MCF 10A (cell line): ENCODE measurements at regions of chr1 and their contacts with region 1.

Region 1: DNA sequence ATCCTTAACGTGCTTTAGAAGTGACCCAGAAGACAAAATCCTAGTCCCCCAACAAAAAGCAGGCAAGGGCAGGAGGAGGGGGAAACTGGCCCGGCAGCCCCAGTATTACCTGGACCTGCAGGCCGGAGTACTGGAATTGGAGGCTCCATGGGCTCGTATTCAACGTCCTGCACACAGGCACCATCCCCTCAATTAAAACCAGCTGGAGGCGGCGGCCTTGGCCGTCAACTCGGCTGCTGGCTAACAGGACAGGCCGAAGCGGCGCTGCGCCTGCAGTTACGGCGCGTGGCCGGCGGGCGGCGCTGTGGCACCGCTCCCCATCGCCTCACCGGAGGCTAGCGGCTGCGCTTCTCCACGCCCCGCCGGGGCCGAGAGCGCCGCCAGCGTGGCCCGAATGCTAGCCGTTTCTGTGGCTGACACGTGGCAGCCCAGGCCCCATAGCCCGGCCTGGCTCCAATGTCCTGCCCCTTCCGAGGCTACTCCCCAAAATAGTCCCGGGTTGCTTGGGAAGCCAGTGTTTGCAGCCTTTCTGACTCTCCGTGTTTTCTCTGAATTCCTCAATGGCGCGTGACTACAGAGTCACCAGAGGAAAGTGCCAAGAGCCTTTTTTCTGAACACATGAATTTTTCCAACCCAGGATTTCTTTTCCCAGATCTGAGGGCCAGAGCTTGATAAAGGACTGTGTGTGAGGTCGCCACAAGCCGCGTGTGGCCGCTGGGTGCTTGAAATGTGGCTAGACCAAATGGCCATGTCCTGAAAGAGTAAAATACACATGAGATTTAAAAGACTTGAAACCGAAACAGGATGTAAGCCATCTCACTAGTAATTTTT is 82.5 kb downstream of the HHIPL2 start:
- DNase-seq: peak; percentile 98
- H3K4me3 Mint-ChIP-seq: peak overlapping the region; percentile 67
- H3K27ac Mint-ChIP-seq: peak overlapping the region; percentile 92
- H3K4me1 Mint-ChIP-seq: peaks cover 14% of the 10 kb centered on the region
- H3K27me3 Mint-ChIP-seq: no peaks in the 10 kb centered on the region
- CTCF ChIP-seq: peak; percentile 100

Region 2: DNA sequence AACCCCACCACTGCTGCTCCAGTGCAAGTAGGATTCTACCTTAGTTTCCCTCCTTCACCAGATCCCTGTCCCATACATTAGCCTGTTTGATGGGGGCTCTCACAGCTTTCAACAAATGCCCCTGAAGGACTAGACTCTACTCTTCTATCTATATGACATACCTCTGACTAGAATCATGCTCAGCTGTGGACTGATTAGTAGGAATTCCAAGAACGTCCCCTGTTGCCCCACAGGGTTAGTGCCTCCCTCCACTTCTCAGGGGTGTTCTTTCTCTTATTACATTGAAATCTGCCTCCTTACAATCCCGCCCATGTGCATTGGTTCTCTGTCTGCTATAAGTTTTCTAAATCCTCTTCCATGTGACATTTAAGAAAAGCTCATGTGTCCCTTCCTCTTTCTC is 347.6 kb before region 1 on chr1:
- CTCF ChIA-PET with region 1: no interaction called
- POLR2A ChIA-PET with region 1: no interaction called
- intact Hi-C with region 1: no loop called
- DNase-seq: no peak
- H3K4me3 Mint-ChIP-seq: no peak overlapping the region
- H3K27ac Mint-ChIP-seq: no peak overlapping the region
- H3K4me1 Mint-ChIP-seq: no peaks in the 10 kb centered on the region
- H3K27me3 Mint-ChIP-seq: no peaks in the 10 kb centered on the region
- CTCF ChIP-seq: no peak

Region 3: GRCh38 chr1:222275729-222276465 is 189.5 kb before region 1 on chr1:
- CTCF ChIA-PET with region 1: no interaction called
- POLR2A ChIA-PET with region 1: no interaction called
- intact Hi-C with region 1: no loop called
- DNase-seq: no peak
- H3K4me3 Mint-ChIP-seq: no peak overlapping the region
- H3K27ac Mint-ChIP-seq: no peak overlapping the region
- H3K4me1 Mint-ChIP-seq: no peaks in the 10 kb centered on the region
- H3K27me3 Mint-ChIP-seq: no peaks in the 10 kb centered on the region
- CTCF ChIP-seq: no peak

Region 4: GRCh38 chr1:222339376-222339947 is 126.0 kb before region 1 on chr1:
- CTCF ChIA-PET with region 1: no interaction called
- POLR2A ChIA-PET with region 1: no interaction called
- intact Hi-C with region 1: no loop called
- DNase-seq: no peak
- H3K4me3 Mint-ChIP-seq: no peak overlapping the region
- H3K27ac Mint-ChIP-seq: no peak overlapping the region
- H3K4me1 Mint-ChIP-seq: peaks cover 7% of the 10 kb centered on the region
- H3K27me3 Mint-ChIP-seq: no peaks in the 10 kb centered on the region
- CTCF ChIP-seq: no peak

Region 5: DNA sequence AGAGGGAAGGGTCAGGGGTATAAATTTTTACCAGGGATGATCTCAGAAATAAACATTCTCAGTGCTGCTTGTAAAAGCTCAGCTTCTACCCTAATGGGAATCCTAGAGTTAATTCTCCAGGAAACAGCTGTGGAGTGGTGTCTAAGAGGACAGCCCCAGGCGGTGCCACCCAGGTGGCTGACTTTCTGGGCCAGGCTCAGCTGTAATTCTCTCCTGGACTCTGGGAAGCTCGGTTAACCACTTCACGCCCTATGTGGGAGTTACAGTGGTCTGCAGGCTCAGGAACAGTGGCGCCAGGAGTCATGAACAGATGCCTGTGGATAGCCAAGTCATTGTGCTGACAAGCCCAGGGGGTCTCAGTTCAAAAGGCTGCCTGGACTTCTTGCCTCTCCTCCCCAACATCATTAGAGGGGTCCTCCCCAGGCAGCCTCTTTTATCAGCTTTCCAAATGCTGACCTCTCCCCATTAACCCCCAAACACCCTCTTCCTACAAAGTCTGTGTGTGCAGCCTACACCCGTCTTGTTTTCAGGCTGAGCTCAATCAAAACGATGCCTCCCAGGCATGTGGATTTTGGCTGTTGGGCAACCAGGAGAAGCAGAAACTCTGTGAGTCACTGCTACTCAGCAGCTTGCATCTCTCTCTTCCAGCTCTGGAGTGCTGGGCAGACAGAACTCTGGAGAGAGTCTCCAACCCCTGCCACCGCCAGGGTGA is 81.3 kb after region 1 on chr1:
- CTCF ChIA-PET with region 1: interaction called, 24 read pairs
- POLR2A ChIA-PET with region 1: interaction called, 17 read pairs
- intact Hi-C with region 1: loop called (anchors 1 kb)
- DNase-seq: peak; percentile 98
- H3K4me3 Mint-ChIP-seq: peak overlapping the region; percentile 46
- H3K27ac Mint-ChIP-seq: peak overlapping the region; percentile 5
- H3K4me1 Mint-ChIP-seq: peaks cover 26% of the 10 kb centered on the region
- H3K27me3 Mint-ChIP-seq: no peaks in the 10 kb centered on the region
- CTCF ChIP-seq: no peak

Region 6: GRCh38 chr1:222589462-222590302 is 124.3 kb after region 1 on chr1 and contains the start of gene TAF1A:
- CTCF ChIA-PET with region 1: interaction called, 20 read pairs
- POLR2A ChIA-PET with region 1: interaction called, 21 read pairs
- intact Hi-C with region 1: loop called (anchors 2 kb)
- DNase-seq: peak; percentile 97
- H3K4me3 Mint-ChIP-seq: peak within 1 kb of the TSS; percentile 97
- H3K27ac Mint-ChIP-seq: peak within 1 kb of the TSS; percentile 96
- H3K4me1 Mint-ChIP-seq: peaks cover 58% of the 10 kb centered on the region
- H3K27me3 Mint-ChIP-seq: no peaks in the 10 kb centered on the region
- CTCF ChIP-seq: no peak
- total RNA-seq, gene TAF1A: 38.2 and 39.3 TPM in 2 replicates

Region 7: DNA sequence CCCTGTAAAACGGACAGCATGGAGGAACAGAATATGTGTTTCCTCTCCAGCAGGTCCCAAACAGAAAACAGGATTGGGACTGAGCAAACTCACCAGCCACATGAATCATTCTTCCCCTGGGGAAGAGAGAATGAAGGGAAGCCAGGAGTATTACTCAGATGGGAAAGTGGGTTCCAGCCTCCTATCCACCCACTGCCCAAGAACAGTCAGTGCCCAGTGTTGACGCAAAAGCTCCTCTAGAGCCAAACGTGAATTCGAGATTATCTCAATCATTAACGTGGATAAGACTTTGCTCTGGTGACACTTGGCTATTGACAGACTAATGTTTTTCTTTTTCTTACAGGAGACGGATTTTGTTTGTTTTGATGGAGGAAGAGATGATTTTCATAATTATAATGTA is 161.8 kb after region 1 on chr1:
- CTCF ChIA-PET with region 1: interaction called, 201 read pairs
- POLR2A ChIA-PET with region 1: interaction called, 6 read pairs
- intact Hi-C with region 1: no loop called
- DNase-seq: peak; percentile 68
- H3K4me3 Mint-ChIP-seq: no peak overlapping the region
- H3K27ac Mint-ChIP-seq: peak overlapping the region; percentile 46
- H3K4me1 Mint-ChIP-seq: peaks cover 10% of the 10 kb centered on the region
- H3K27me3 Mint-ChIP-seq: no peaks in the 10 kb centered on the region
- CTCF ChIP-seq: no peak

Region 8: GRCh38 chr1:222643938-222644635 is 178.7 kb after region 1 on chr1:
- CTCF ChIA-PET with region 1: interaction called, 76 read pairs
- POLR2A ChIA-PET with region 1: interaction called, 45 read pairs
- intact Hi-C with region 1: loop called (anchors 2 kb)
- DNase-seq: peak; percentile 100
- H3K4me3 Mint-ChIP-seq: peak overlapping the region; percentile 85
- H3K27ac Mint-ChIP-seq: peak overlapping the region; percentile 97
- H3K4me1 Mint-ChIP-seq: peaks cover 10% of the 10 kb centered on the region
- H3K27me3 Mint-ChIP-seq: no peaks in the 10 kb centered on the region
- CTCF ChIP-seq: no peak

Region 9: DNA sequence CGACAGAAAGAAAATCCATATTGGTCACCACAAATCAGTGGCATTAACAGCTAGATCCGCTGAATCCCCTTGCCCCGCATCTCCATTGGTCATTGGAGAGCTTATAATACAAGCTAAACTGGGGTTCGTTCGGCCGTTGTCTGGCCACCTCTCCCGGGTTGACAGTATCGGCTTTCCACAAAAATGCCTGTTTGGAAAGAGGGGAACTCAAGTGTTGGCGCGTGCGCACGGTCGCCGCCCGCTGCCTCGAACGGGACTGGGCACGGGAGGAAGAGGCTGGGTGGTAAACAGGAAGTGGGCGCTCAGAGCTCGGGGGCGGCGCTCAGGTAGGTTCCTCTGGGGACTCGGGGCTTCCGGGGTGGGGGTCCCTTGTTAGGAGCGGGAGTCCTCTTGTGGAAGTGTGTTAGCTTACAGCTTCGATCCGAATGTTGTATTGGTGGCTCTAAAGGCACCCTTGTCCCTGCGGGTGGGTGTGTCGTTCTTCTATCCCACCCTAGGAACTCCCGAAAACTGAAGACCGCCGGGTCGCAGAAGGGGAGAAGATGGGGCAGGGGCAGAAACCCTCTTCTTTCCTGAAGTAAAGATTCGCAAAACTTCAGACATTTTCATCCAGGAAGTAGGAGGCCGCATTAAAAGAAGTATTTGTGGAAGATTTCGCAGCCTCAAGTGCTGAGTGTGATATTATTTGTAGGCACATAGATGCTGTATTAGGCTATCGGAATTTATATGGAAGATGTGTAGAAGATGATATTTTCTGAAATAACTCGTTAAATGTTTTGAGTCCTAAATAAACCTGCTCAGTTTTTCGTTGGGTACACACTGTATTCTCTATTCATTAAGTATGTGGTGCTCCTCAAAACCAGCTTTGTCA is 247.9 kb after region 1 on chr1:
- CTCF ChIA-PET with region 1: interaction called, 5 read pairs
- POLR2A ChIA-PET with region 1: interaction called, 18 read pairs
- intact Hi-C with region 1: loop called (anchors 1 kb)
- DNase-seq: peak; percentile 99
- H3K4me3 Mint-ChIP-seq: peak overlapping the region; percentile 86
- H3K27ac Mint-ChIP-seq: peak overlapping the region; percentile 97
- H3K4me1 Mint-ChIP-seq: peaks cover 40% of the 10 kb centered on the region
- H3K27me3 Mint-ChIP-seq: no peaks in the 10 kb centered on the region
- CTCF ChIP-seq: no peak